ENCODE measurements at regions of chr1 and their contacts with region 1.

Region 1: GRCh38 chr1:240027059-240027462 is 64.6 kb upstream of the FMN2 start:
- DNase-seq: peak; percentile 44
- ATAC-seq: peak; percentile 53
- H3K4me3 Mint-ChIP-seq: no peak overlapping the region
- H3K27ac Mint-ChIP-seq: no peak overlapping the region
- H3K4me1 Mint-ChIP-seq: no peaks in the 10 kb centered on the region
- H3K27me3 Mint-ChIP-seq: no peaks in the 10 kb centered on the region
- CTCF ChIP-seq: peak; percentile 66

Region 2: DNA sequence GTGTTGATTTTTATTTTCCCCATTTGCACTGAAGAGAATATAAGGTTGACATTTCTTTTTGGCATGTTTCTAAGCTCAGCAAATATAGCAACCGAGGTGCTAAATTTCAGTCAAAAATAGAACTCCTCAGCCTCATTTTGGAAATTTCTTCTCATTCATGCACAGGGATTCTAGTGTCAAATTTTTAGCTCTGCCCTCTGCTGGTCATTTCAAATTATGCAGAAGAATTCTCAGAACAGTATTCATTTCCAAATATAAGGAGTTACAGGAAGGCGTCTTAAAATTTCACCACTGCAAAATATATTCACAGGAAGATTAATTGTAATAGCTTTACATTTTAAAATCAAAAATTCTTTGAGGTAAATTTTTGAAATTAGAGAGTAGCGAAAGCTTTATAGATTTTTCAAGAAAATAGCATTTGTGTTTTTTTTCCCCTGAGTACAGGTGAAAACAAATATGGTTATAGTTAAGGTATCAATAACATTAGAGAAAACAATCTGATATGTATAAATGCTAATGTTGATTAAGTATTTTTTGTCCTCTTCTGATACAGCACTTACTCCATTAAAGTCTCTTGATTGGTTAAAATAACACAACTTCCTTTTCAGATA is 122.5 kb after region 1 on chr1:
- CTCF ChIA-PET with region 1: interaction called, 3 read pairs
- POLR2A ChIA-PET with region 1: no interaction called
- intact Hi-C with region 1: loop called (anchors 10 kb)
- DNase-seq: no peak
- ATAC-seq: no peak
- H3K4me3 Mint-ChIP-seq: no peak overlapping the region
- H3K27ac Mint-ChIP-seq: no peak overlapping the region
- H3K4me1 Mint-ChIP-seq: no peaks in the 10 kb centered on the region
- H3K27me3 Mint-ChIP-seq: peaks cover 2% of the 10 kb centered on the region
- CTCF ChIP-seq: peak; percentile 74

Measured in activated CD8-positive, alpha-beta T cell treated with anti-CD3 and anti-CD28 coated beads for 36 hours (primary cell).